Dendritic cell treated with granulocyte-macrophage colony-stimulating factor and Interleukin-4, amounts not matched to agents 40 ng/mL and 50 ng/mL, for 4 days (primary cell): ENCODE measurements at regions of chr1 and their contacts with region 1.

Region 1: DNA sequence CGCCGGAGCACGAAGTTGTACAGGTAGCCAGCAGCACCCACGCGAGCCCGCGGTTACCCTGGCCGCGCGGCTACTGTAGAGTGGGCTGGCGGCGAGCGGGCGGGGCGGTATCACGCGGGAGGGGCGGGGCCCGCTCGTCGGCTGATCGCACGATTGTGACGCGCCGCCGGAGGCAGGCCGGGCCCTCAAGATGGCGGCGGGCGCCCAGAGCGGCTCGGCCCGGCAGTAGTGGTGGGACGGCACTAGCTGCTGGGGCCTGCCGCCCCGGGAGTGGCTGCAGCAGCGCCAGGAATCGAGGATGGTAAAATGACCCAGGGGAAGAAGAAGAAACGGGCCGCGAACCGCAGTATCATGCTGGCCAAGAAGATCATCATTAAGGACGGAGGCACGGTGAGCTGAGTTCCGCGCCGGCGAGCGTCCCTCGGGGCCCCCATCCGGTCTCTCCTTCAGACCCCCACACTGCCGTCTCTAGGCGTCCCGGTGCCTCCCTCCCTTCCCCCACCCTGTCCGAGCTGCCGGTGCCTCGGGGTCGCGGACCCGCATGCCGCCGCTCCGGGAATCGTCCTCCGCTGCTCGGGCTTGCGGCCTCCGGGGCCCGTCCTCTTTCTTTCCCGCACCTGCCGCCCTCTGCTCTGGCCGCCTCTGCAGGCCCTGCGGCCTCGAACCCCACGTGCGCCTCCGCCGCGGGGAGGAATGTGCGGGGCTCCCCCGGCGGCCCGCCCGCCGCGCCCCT is 68.3 kb downstream of the SLC35A3 start:
- H3K4me3 Mint-ChIP-seq: peak overlapping the region; percentile 84
- H3K27ac Mint-ChIP-seq: peak overlapping the region; percentile 90
- H3K4me1 Mint-ChIP-seq: peaks cover 36% of the 10 kb centered on the region
- H3K27me3 Mint-ChIP-seq: no peaks in the 10 kb centered on the region

Region 2: DNA sequence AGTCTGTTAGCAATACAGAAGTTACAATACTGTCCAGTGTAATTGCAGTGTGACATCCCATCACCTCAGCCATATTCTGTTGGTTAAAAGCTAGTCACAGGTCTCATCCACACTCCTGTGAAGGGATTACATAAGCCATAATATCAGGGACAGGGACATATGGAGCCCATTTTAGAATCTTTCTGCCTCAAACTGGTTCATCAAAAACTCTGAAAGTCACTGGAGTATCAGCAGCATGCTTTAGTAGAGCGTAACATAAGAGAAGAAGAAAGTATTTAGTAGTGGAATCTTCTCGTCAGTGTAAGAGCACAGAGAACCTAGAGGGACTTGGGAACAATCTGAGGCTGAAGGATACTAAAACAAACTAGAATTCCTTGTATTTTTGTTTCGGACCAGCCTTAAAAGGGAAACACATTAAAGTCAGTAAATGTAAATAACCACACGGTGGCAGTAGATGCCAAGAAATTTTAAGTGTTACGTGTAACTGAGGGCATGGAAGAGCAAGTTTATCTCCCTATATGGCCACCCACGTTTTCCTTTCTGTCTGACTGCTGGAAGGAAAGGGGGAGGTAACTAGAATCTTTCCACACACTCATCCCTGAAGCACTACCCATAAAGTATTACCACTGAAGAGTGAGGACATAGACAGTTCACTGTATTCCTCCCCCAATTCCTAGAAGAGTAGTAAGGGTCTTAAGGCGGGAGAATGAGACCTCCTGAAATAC is 229.5 kb before region 1 on chr1:
- intact Hi-C with region 1: loop called (anchors 2 kb)
- H3K4me3 Mint-ChIP-seq: no peak overlapping the region
- H3K27ac Mint-ChIP-seq: no peak overlapping the region
- H3K4me1 Mint-ChIP-seq: no peaks in the 10 kb centered on the region
- H3K27me3 Mint-ChIP-seq: peaks cover 3% of the 10 kb centered on the region

Region 3: DNA sequence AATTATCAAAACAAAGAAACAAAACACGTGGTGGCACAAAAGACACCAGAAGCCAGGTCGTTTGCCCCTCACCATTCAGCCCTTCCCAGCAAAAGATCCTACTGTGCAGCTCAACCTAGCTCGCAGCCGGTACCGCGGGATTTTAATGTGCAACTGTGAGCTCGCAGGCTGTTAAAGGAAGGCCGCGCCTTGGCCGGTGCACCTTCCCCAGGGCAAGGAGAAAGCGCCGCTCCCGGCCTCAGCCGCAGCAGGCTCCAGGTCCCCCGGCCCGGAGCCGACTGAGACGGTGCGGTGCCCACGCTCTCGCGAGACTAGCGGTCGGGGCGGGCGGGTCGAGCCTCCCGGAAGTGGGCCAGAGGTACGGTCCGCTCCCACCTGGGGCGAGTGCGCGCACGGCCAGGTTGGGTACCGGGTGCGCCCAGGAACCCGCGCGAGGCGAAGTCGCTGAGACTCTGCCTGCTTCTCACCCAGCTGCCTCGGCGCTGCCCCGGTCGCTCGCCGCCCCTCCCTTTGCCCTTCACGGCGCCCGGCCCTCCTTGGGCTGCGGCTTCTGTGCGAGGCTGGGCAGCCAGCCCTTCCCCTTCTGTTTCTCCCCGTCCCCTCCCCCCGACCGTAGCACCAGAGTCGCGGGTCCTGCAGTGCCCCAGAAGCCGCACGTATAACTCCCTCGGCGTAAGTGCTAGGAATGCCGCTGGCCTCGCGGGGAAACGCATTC is 188.2 kb before region 1 on chr1 and contains the start of gene AGL:
- intact Hi-C with region 1: loop called (anchors 5 kb)
- H3K4me3 Mint-ChIP-seq: peak within 1 kb of the TSS; percentile 89
- H3K27ac Mint-ChIP-seq: peak within 1 kb of the TSS; percentile 88
- H3K4me1 Mint-ChIP-seq: peaks cover 13% of the 10 kb centered on the region
- H3K27me3 Mint-ChIP-seq: no peaks in the 10 kb centered on the region

Region 4: DNA sequence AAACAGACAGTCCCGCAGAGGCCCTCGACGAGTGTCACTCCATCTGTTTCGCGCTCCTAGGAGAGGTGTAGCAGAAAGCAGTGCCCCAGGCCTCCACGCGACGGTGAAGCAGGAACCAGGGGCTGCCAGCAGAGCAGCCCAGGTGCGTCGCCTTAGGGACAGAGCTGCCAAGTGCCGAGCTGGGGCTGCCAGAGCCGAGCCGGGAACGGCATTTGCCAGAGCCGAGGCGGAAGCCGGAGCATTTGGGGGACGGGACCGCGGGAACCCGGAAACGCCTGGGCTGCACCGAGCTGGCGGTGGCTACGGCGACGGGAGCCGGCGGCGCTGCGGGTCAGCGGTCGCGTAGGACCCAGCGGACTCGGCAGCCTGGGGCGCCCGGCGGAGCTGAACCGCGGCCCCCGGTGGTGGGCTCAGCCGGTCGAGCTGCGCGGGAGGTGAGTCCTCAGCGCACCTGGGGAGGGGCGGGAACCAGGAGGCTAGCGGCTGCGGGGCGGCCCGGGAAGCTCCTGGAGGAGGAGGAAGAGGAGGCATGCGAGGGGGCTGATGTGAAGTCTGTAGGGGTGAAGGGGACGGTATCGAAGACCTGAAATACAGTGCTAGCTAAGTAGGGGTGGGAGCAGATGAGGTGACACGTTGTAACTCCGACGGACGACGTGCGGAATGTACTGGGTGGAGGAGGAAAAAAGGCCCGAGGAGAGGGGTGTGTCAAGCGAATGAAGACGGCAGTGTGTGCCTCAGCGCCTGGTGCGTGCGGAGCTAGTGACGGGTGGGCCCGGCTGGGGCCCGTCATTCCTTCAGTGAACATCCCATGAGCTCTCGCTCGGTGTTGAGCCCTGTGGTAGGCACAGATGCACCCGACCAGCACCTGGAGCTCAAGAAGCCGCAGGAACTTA is 68.1 kb before region 1 on chr1 and contains the start of gene SLC35A3:
- intact Hi-C with region 1: loop called (anchors 2 kb)
- H3K4me3 Mint-ChIP-seq: peak within 1 kb of the TSS; percentile 100
- H3K27ac Mint-ChIP-seq: peak within 1 kb of the TSS; percentile 83
- H3K4me1 Mint-ChIP-seq: peaks cover 17% of the 10 kb centered on the region
- H3K27me3 Mint-ChIP-seq: no peaks in the 10 kb centered on the region

Region 5: DNA sequence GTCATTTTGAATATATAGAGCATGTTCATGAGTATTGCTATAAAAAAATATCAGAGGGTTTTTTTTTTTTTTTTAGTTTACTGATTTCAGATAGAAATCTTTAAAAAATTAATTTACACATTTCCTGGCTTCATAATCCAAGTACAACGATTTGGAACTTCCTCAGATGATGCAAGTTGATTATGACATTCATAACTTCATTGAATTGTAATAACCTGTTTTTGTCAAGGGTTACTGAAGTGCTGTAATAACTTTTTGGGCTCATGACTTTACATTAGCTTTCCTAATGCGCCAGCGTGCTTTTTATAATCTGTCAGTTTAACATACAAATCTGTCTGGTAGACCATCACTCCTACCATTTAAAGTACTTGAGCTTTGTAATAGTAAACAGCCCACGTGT is 13.3 kb after region 1 on chr1:
- intact Hi-C with region 1: loop called (anchors 1 kb)
- H3K4me3 Mint-ChIP-seq: no peak overlapping the region
- H3K27ac Mint-ChIP-seq: no peak overlapping the region
- H3K4me1 Mint-ChIP-seq: peaks cover 26% of the 10 kb centered on the region
- H3K27me3 Mint-ChIP-seq: no peaks in the 10 kb centered on the region

Region 6: DNA sequence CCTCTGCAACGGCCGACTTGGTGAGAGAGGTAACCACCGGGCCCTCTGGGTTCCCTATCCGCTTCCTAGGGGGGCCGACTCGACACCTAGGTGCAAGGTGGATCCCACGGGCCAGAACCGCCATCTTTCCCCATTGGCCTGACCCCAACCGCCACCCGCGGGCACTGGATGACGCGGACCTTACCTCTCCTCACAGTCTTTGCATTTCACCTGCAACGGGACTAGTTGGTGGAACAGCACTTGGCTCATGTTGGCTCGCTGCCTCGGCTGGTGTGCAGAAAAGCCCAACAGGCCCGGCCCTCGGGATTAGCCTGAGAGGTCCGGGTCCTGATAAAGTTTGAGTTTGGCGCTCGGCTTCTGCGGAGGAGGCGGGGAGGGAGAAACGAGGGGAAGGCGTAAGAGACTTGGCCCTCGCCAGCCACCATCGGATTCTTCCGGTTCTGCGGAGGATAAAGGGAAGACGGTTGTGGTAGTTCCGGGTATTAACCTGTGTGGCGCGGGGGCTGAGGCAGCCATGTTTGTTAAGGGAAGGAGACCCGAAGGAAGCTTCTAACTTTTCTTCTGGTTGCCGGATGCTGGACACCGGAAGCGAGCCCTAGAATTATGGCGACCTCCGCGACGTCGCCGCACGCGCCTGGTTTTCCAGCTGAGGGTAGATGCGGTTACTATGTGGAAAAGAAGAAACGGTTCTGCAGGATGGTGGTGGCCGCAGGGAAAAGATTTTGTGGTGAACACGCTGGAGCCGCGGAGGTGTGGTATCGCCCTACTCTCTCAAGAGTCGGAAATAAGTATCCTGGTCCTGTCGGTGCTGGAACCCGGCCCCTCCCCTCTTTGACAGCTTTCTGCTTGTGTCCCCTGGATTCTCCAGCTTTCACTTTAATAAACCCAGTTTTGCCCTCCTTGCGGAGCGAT is 94.7 kb after region 1 on chr1 and contains the starts of genes SASS6 and TRMT13:
- intact Hi-C with region 1: loop called (anchors 2 kb)
- H3K4me3 Mint-ChIP-seq: peak within 1 kb of the TSS; percentile 98
- H3K27ac Mint-ChIP-seq: peak within 1 kb of the TSS; percentile 86
- H3K4me1 Mint-ChIP-seq: peaks cover 22% of the 10 kb centered on the region
- H3K27me3 Mint-ChIP-seq: no peaks in the 10 kb centered on the region

Region 7: GRCh38 chr1:100895540-100896483 is 857.7 kb after region 1 on chr1 and contains the start of gene SLC30A7:
- intact Hi-C with region 1: loop called (anchors 10 kb)
- H3K4me3 Mint-ChIP-seq: peak within 1 kb of the TSS; percentile 87
- H3K27ac Mint-ChIP-seq: peak within 1 kb of the TSS; percentile 100
- H3K4me1 Mint-ChIP-seq: peaks cover 12% of the 10 kb centered on the region
- H3K27me3 Mint-ChIP-seq: no peaks in the 10 kb centered on the region